MCF 10A (cell line): ENCODE measurements at regions of chr17 and their contacts with region 1.

Region 1: DNA sequence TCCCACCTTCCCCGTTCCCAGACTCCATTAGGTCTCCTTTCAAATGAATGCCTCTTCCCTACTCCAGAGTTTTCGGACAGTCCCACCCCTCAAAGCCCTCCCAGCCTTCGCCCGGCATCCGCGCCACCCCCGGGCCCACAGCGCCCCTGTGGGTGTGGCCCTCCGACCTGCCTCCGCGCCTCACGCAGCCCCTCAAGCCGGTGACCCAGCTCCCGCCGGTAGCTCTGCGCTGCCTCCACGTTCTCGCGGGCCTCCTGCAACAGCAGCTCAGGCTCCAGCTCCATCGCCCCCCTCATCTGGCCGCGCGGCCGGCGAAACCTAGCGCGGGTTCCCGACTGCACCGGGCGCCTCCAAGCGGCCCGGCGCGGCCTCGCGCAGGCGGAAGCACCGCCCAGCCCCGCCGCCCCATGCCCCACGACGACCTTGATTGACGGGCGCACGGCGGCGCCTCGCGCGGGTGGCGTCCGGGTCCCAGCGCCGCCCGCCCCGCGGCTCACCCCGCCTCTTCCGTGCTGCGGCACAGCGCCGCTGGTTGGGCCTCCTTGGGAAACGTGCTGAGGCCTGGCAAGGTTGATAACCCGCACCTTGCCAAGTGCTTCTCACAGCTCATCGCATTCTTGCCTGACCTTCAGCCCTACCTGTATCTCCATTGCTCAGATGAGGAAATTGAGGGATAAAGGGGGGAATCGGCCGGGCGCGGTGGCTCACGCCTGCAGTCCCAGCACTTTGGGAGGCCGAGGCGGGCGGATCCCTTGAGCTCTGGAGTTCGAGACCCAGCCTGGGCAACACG is at the start of gene CRLF3:
- DNase-seq: peak; percentile 91
- H3K4me3 Mint-ChIP-seq: peak within 1 kb of the TSS; percentile 100
- H3K27ac Mint-ChIP-seq: peak within 1 kb of the TSS; percentile 83
- H3K4me1 Mint-ChIP-seq: peaks cover 16% of the 10 kb centered on the region
- H3K27me3 Mint-ChIP-seq: no peaks in the 10 kb centered on the region
- CTCF ChIP-seq: peak; percentile 40
- total RNA-seq, gene CRLF3: 14.7 and 15.0 TPM in 2 replicates

Region 2: DNA sequence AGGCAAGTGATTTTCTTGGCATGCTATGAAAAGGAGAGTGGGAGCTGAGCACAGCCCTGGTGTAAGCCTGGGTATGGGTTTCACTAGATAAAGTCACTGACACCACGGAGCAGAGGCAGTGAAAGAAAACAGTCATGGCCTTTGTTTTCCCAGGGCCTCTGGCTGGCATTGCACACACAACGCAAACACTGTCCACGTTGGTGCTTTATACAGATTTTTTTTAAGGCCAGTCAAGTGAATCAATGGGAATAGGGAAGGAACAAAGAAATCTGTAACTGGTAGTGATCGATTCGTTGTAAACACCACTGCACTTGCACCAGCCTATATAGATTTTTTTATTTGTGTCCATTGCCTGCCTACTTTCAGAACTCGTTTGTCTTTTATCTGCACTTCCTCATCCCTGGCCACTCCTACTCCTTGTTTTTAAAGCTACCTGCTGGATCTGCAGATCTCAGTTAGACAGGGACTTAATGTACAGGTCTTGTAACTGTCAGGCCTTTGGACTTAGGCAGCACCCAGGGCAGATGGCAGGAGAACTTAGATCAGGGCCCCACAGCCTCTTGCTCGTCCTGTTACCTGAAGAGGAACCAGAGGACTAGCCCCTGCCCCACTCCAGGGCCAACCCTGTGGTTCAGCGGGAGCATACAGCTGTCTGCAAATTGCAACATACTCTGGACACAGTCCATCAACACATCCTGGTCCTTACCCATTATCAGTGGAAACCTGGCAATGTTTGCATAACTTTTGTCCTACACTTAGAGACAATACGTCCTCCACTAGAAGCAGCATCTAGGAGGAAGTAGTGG is 480.1 kb before region 1 on chr17:
- CTCF ChIA-PET with region 1: no interaction called
- POLR2A ChIA-PET with region 1: no interaction called
- intact Hi-C with region 1: loop called (anchors 5 kb)
- DNase-seq: peak; percentile 89
- H3K4me3 Mint-ChIP-seq: peak overlapping the region; percentile 17
- H3K27ac Mint-ChIP-seq: peak overlapping the region; percentile 52
- H3K4me1 Mint-ChIP-seq: peaks cover 20% of the 10 kb centered on the region
- H3K27me3 Mint-ChIP-seq: no peaks in the 10 kb centered on the region
- CTCF ChIP-seq: no peak

Region 3: GRCh38 chr17:30894236-30894635 is 69.7 kb after region 1 on chr17:
- CTCF ChIA-PET with region 1: no interaction called
- POLR2A ChIA-PET with region 1: no interaction called
- intact Hi-C with region 1: no loop called
- DNase-seq: no peak
- H3K4me3 Mint-ChIP-seq: no peak overlapping the region
- H3K27ac Mint-ChIP-seq: no peak overlapping the region
- H3K4me1 Mint-ChIP-seq: no peaks in the 10 kb centered on the region
- H3K27me3 Mint-ChIP-seq: no peaks in the 10 kb centered on the region
- CTCF ChIP-seq: no peak